MCF 10A (cell line): ENCODE measurements at regions of chr12 and their contacts with region 1.

Region 1: GRCh38 chr12:85057370-85057963 is 21.3 kb downstream of the LRRIQ1 start:
- DNase-seq: peak; percentile 70
- H3K4me3 Mint-ChIP-seq: no peak overlapping the region
- H3K27ac Mint-ChIP-seq: no peak overlapping the region
- H3K4me1 Mint-ChIP-seq: peaks cover 6% of the 10 kb centered on the region
- H3K27me3 Mint-ChIP-seq: no peaks in the 10 kb centered on the region
- CTCF ChIP-seq: peak; percentile 71

Region 2: DNA sequence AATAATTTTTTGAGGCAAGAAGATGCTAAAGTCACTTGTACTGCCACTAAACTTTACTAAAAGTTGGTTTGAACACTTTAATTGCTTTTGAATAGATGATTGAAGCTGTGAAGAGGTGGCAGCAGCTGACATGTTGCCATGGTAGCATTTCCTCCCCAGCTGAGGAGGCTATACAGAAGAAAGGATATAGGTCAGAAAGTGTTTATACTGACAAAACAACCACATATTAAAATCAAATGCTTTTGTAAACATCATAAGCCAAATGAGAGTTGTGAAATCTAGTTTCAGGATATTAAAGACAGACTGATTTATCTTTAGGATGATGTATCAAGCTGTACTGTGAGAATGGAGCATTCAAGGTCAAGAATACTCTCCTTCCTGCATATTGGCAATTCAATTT is 63.0 kb before region 1 on chr12:
- CTCF ChIA-PET with region 1: no interaction called
- POLR2A ChIA-PET with region 1: no interaction called
- intact Hi-C with region 1: no loop called
- DNase-seq: no peak
- H3K4me3 Mint-ChIP-seq: no peak overlapping the region
- H3K27ac Mint-ChIP-seq: no peak overlapping the region
- H3K4me1 Mint-ChIP-seq: peaks cover 18% of the 10 kb centered on the region
- H3K27me3 Mint-ChIP-seq: no peaks in the 10 kb centered on the region
- CTCF ChIP-seq: no peak

Region 3: GRCh38 chr12:85036241-85036707 is 21.2 kb before region 1 on chr12 and contains the starts of genes LRRIQ1 and TSPAN19:
- CTCF ChIA-PET with region 1: interaction called, 11 read pairs
- POLR2A ChIA-PET with region 1: no interaction called
- intact Hi-C with region 1: no loop called
- DNase-seq: peak; percentile 93
- H3K4me3 Mint-ChIP-seq: peak within 1 kb of the TSS; percentile 92
- H3K27ac Mint-ChIP-seq: peak within 1 kb of the TSS; percentile 88
- H3K4me1 Mint-ChIP-seq: no peaks in the 10 kb centered on the region
- H3K27me3 Mint-ChIP-seq: peaks cover 11% of the 10 kb centered on the region
- CTCF ChIP-seq: no peak
- total RNA-seq, gene LRRIQ1: 0.70 and 1.5 TPM in 2 replicates
- total RNA-seq, gene TSPAN19: 0.63 and 1.1 TPM in 2 replicates

Region 4: DNA sequence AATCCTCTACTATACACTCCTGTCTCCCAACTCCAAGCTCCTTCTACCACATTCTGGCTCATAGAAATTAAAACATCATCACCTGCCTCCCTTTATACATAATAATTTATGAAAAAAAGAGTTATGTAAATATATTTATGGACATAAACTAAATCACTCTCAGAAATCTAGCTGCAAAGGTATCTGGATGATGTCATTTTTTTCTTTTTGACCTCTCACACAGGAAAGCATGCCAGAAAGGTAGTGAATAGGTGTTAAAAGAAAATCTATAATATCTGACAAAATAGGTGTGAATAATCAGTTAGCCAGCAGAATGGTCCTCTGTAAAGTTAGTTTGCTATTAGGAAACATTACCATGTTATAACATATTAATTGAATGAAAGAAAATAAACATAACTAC is 13.6 kb before region 1 on chr12:
- CTCF ChIA-PET with region 1: interaction called, 16 read pairs
- POLR2A ChIA-PET with region 1: no interaction called
- intact Hi-C with region 1: no loop called
- DNase-seq: no peak
- H3K4me3 Mint-ChIP-seq: no peak overlapping the region
- H3K27ac Mint-ChIP-seq: no peak overlapping the region
- H3K4me1 Mint-ChIP-seq: no peaks in the 10 kb centered on the region
- H3K27me3 Mint-ChIP-seq: no peaks in the 10 kb centered on the region
- CTCF ChIP-seq: no peak